ENCODE measurements at regions of chr20 and their contacts with region 1.

Region 1: DNA sequence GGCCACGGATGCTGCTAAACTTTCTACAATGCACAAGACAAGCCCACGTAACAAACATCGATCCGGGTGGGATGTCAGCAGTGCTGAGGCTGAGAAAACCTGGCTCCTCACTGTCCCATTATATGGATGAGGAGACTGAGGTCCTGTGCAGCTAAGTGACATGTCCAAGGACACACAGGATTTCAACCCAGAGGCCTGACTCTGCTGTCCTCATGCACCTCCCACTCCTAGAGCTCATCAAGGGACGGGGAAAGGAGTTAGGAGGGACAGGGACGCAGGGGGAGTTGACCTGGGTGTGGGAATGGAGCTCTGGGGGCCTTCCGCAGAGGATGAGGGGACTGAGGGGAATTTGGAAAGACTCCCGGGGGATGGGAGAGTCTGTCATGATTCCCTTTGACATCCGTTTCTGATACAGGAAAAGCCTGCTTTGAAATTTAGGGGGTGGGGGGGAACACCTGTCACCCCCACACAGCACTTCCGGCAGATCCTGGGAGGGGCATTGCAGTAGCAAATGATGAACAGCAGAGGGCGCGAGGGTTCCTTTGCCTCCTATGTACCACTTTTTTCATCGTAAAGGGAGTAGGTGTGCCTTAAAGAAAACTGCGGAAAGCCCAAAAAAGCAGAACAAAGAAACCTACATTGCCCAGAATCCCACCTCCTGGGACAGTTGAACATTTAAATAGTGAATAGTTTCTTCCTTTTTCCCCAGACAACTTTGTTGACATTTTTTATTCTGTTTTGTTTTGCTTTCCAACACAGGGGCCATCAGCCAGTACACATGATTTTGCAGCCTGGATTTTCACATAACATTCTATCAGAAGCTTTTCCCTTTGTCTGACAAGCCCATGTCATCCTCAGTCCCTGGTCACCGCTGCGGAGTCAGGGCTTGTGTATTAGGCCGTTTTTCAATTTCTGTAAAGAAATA is 48.6 kb downstream of the SLC2A10 start:
- DNase-seq: peak; percentile 79
- ATAC-seq: peak; percentile 63
- H3K4me3 Mint-ChIP-seq: no peak overlapping the region
- H3K27ac Mint-ChIP-seq: no peak overlapping the region
- H3K4me1 Mint-ChIP-seq: no peaks in the 10 kb centered on the region
- H3K27me3 Mint-ChIP-seq: peaks cover 12% of the 10 kb centered on the region

Region 2: GRCh38 chr20:46928580-46929132 is 170.6 kb after region 1 on chr20:
- CTCF ChIA-PET with region 1: no interaction called
- POLR2A ChIA-PET with region 1: no interaction called
- intact Hi-C with region 1: no loop called
- DNase-seq: no peak
- ATAC-seq: no peak
- H3K4me3 Mint-ChIP-seq: no peak overlapping the region
- H3K27ac Mint-ChIP-seq: no peak overlapping the region
- H3K4me1 Mint-ChIP-seq: no peaks in the 10 kb centered on the region
- H3K27me3 Mint-ChIP-seq: peaks cover 8% of the 10 kb centered on the region

Region 3: GRCh38 chr20:47150403-47151152 is 392.6 kb after region 1 on chr20:
- CTCF ChIA-PET with region 1: no interaction called
- POLR2A ChIA-PET with region 1: no interaction called
- intact Hi-C with region 1: loop called (anchors 1 to 2 kb)
- DNase-seq: peak; percentile 47
- ATAC-seq: peak; percentile 95
- H3K4me3 Mint-ChIP-seq: no peak overlapping the region
- H3K27ac Mint-ChIP-seq: no peak overlapping the region
- H3K4me1 Mint-ChIP-seq: no peaks in the 10 kb centered on the region
- H3K27me3 Mint-ChIP-seq: peaks cover 8% of the 10 kb centered on the region

Region 4: GRCh38 chr20:47392015-47392720 is 634.2 kb after region 1 on chr20:
- CTCF ChIA-PET with region 1: interaction called, 3 read pairs
- POLR2A ChIA-PET with region 1: no interaction called
- intact Hi-C with region 1: loop called in 1 of 2 experiments (anchors 10 kb)
- DNase-seq: peak; percentile 37
- ATAC-seq: peak; percentile 87
- H3K4me3 Mint-ChIP-seq: no peak overlapping the region
- H3K27ac Mint-ChIP-seq: peak overlapping the region; percentile 69
- H3K4me1 Mint-ChIP-seq: peaks cover 18% of the 10 kb centered on the region
- H3K27me3 Mint-ChIP-seq: no peaks in the 10 kb centered on the region